ENCODE measurements at regions of chr16 and their contacts with region 1.

Region 1: DNA sequence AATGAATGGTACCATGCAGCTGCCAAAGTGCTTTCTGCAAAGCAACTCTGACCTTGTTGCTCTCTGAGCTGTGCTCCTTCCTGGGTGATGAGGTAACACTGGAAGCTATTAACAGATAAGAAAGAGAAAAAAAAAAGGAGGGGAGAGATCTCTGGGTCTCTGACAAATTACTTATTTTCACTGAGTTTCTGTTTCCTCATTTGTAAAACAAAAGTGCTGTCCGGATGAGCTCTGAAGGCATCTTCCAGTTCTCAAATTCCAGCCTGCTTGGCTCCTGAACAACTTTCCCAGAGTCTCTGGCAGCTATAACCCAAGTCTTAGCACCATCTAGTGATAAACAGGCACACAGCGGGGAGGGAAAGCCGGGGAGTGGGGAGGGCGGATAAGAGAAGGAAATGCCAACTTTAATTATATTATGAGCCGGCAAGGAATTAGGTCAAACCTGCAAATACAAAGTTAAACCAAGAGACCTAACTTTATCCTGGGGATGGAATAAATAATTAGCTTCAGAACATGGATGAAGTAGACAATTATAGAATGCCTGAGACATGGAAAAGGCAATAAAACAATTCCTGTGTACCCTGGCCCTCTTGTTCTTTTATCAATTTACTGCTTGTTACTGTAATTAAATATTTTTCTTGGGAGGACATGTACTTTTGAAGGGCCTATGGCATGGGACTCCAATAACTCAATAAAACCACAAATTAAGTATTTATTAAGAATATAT is 61.3 kb upstream of the KIFC3 start:
- DNase-seq: peak; percentile 45
- H3K4me3 ChIP-seq: no peak overlapping the region
- H3K27ac ChIP-seq: no peak overlapping the region
- H3K27me3 ChIP-seq: no peaks in the 10 kb centered on the region
- CTCF ChIP-seq: peak; percentile 75

Region 2: GRCh38 chr16:57757326-57757786 is 106.2 kb before region 1 on chr16:
- CTCF ChIA-PET with region 1: interaction called, 46 read pairs
- POLR2A ChIA-PET with region 1: no interaction called
- DNase-seq: peak; percentile 37
- H3K4me3 ChIP-seq: no peak overlapping the region
- H3K27ac ChIP-seq: no peak overlapping the region
- H3K27me3 ChIP-seq: no peaks in the 10 kb centered on the region
- CTCF ChIP-seq: peak; percentile 95

Region 3: GRCh38 chr16:57764341-57765159 is 99.0 kb before region 1 on chr16:
- CTCF ChIA-PET with region 1: interaction called, 10 read pairs
- POLR2A ChIA-PET with region 1: interaction called, 5 read pairs
- DNase-seq: peak; percentile 41
- H3K4me3 ChIP-seq: no peak overlapping the region
- H3K27ac ChIP-seq: peak overlapping the region; percentile 73
- H3K27me3 ChIP-seq: no peaks in the 10 kb centered on the region
- CTCF ChIP-seq: no peak

Region 4: DNA sequence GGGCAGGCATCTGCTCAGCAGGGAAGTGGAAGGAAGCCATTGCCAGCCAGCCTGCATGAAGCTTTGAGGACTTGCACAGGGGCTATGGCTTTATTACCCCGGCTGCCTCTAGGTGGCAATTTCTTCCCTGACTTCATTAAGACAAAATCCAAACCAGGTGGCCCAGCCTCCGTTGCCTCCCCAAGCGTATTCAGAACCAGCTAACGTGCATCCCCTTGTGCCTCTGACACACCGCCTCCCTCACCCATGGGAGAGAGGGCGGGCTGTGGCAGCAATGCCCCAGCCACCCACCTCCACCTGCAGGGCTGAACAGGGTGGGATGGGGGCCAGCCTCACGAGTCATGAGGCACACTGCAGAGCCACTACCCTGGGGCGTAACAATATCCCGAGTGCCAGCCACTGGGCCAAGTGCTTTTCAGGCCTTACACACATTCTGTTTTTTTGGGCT is 68.1 kb before region 1 on chr16:
- CTCF ChIA-PET with region 1: interaction called, 11 read pairs
- POLR2A ChIA-PET with region 1: no interaction called
- DNase-seq: no peak
- H3K4me3 ChIP-seq: no peak overlapping the region
- H3K27ac ChIP-seq: no peak overlapping the region
- H3K27me3 ChIP-seq: no peaks in the 10 kb centered on the region
- CTCF ChIP-seq: peak; percentile 44

Measured in AG04450 (cell line).